K562 (cell line): ENCODE measurements at regions of chrX and their contacts with region 1.

Region 1: DNA sequence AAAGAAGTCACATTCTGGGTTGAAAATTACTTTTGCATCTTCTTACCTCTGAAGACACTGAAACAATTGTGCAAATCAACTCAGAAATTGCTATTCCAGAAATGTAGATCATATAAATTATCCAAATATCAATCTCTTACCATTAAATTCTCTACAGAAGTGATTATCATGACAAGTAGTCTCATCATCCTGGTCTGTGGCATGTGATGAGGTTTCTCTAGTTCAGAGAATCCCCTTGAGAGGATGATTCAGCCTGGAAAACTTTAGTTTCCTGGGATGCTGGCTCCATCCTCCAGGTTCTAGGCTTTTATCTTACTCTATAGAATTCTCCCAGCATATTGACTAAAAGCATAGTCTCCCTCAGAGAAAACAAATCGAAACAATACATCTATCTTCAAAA is 76.2 kb upstream of the S100G start:
- DNase-seq: no peak
- ATAC-seq: no peak
- H3K4me3 ChIP-seq: no peak overlapping the region
- H3K27ac ChIP-seq: no peak overlapping the region
- H3K4me1 ChIP-seq: no peaks in the 10 kb centered on the region; a peak in 1 of 5 replicates
- H3K27me3 ChIP-seq: no peaks in the 10 kb centered on the region
- CTCF ChIP-seq: no peak
- EP300 ChIP-seq: no peak
- POLR2A ChIP-seq: no peak
- RAD21 ChIP-seq: no peak

Region 2: DNA sequence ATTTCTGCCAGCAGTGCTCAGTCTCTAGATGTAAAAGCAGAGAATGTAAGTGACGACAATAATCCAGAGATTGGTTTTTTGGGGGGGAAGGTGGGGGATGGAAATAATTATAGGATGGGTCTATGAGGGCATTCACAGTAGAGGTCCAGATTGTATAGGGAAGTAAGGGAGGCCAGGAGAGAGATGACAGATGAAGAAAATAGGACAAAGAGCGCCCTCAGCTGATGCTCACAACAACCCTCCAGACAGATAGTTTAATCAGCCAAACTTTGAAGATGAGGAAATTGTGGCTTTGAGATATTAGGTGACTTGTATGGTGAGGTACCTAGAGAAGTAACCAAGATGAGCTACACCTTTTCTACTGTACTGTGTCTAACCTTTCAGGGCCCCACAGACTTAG is 268.6 kb before region 1 on chrX:
- CTCF ChIA-PET with region 1: no interaction called
- POLR2A ChIA-PET with region 1: no interaction called
- in situ Hi-C with region 1: no loop called
- intact Hi-C with region 1: no loop called
- DNase-seq: peak in 2 of 4 experiments; percentile 2
- ATAC-seq: no peak
- H3K4me3 ChIP-seq: no peak overlapping the region
- H3K27ac ChIP-seq: no peak overlapping the region
- H3K4me1 ChIP-seq: no peaks in the 10 kb centered on the region
- H3K27me3 ChIP-seq: no peaks in the 10 kb centered on the region
- CTCF ChIP-seq: peak in 1 of 3 experiments; percentile 41; a peak in 2 of 6 replicates
- EP300 ChIP-seq: no peak
- POLR2A ChIP-seq: no peak
- RAD21 ChIP-seq: peak; percentile 19 to 54; a peak in 3 of 4 replicates

Region 3: DNA sequence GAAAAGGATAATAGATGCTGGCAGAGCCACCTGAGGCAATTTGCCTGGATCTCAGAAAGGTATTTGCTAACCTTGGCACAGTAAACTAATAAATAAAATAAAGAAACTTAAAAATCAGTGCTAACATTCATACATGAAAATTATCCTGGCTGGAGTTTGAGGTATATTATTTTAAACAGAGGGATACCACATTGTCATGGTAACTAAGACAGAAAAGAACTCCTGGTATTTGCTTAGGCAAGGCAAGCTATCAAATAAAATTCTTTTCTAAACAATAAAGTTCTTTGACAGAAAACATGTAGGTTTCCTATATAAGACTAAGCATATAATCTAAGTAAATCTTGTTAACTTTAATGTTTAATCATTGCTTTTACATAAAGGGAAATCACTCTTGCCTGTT is 187.7 kb before region 1 on chrX:
- CTCF ChIA-PET with region 1: no interaction called
- POLR2A ChIA-PET with region 1: no interaction called
- in situ Hi-C with region 1: no loop called
- intact Hi-C with region 1: no loop called
- DNase-seq: no peak
- ATAC-seq: no peak
- H3K4me3 ChIP-seq: no peak overlapping the region
- H3K27ac ChIP-seq: no peak overlapping the region
- H3K4me1 ChIP-seq: no peaks in the 10 kb centered on the region
- H3K27me3 ChIP-seq: no peaks in the 10 kb centered on the region
- CTCF ChIP-seq: no peak
- EP300 ChIP-seq: no peak
- POLR2A ChIP-seq: no peak
- RAD21 ChIP-seq: no peak

Region 4: GRCh38 chrX:16528620-16529019 is 45.2 kb before region 1 on chrX:
- CTCF ChIA-PET with region 1: no interaction called
- POLR2A ChIA-PET with region 1: no interaction called
- in situ Hi-C with region 1: no loop called
- intact Hi-C with region 1: no loop called
- DNase-seq: no peak
- ATAC-seq: no peak
- H3K4me3 ChIP-seq: no peak overlapping the region
- H3K27ac ChIP-seq: no peak overlapping the region
- H3K4me1 ChIP-seq: no peaks in the 10 kb centered on the region
- H3K27me3 ChIP-seq: peaks cover 3 to 8% of the 10 kb centered on the region in 2 experiments; a peak in 3 of 5 replicates
- CTCF ChIP-seq: no peak
- EP300 ChIP-seq: no peak
- POLR2A ChIP-seq: no peak
- RAD21 ChIP-seq: no peak

Region 5: DNA sequence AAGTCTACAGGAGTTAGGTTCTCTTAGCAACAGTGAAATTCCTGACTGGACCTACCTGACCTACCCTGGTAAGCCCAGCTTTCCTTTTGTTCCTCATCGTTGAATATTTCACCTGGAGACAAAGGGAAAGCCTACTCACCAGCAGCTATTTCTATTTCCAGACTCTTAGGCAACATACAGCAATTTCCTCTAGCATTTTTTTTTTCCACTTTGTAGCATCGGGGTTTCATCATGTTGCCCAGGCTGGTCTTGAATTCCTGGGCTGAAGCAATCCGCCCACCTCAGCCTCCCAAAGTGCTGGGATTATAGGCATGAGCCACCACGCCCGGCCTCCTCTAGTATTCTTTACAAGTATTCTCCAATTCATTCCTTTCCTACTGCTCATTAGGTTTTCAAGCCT is 69.4 kb after region 1 on chrX:
- CTCF ChIA-PET with region 1: no interaction called
- POLR2A ChIA-PET with region 1: no interaction called
- in situ Hi-C with region 1: no loop called
- intact Hi-C with region 1: no loop called
- DNase-seq: no peak
- ATAC-seq: no peak
- H3K4me3 ChIP-seq: no peak overlapping the region
- H3K27ac ChIP-seq: no peak overlapping the region
- H3K4me1 ChIP-seq: peaks cover 2 to 6% of the 10 kb centered on the region in 2 experiments; a peak in 3 of 5 replicates
- H3K27me3 ChIP-seq: no peaks in the 10 kb centered on the region
- CTCF ChIP-seq: no peak
- EP300 ChIP-seq: no peak
- POLR2A ChIP-seq: no peak
- RAD21 ChIP-seq: no peak

Region 6: DNA sequence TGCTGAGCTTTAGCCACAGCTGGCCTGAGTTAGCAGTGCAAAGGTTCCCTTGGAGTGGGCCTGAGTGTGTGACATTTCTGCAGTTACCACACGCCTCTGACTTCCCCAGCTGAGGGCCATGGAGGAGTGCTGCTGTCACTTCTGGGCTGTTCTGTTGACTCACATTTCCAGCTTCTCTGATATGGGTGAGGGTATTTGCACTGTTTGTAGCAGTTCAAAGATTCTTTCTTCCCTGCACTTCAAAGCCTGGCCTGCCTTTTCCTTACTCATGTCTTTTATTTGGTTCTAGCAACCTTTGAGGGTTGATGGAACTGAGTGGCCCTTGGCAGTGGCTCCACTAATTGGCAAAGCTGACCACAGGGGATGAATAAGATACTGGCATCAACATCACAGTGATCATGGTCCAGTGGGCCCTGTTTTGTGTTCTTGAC is 1137.1 kb after region 1 on chrX:
- CTCF ChIA-PET with region 1: no interaction called
- POLR2A ChIA-PET with region 1: no interaction called
- in situ Hi-C with region 1: loop called (anchors 10 kb)
- intact Hi-C with region 1: no loop called
- DNase-seq: no peak
- ATAC-seq: no peak
- H3K4me3 ChIP-seq: no peak overlapping the region
- H3K27ac ChIP-seq: no peak overlapping the region
- H3K4me1 ChIP-seq: no peaks in the 10 kb centered on the region
- H3K27me3 ChIP-seq: no peaks in the 10 kb centered on the region
- CTCF ChIP-seq: no peak
- EP300 ChIP-seq: no peak
- POLR2A ChIP-seq: no peak
- RAD21 ChIP-seq: no peak